ENCODE measurements at regions of chr14 and their contacts with region 1.

Region 1: GRCh38 chr14:44657696-44658388 is 150.8 kb upstream of the FSCB start:
- DNase-seq: peak; percentile 90
- H3K4me3 ChIP-seq: no peak overlapping the region
- H3K27ac ChIP-seq: peak overlapping the region; percentile 65
- H3K4me1 ChIP-seq: peaks cover 43% of the 10 kb centered on the region
- H3K27me3 ChIP-seq: no peaks in the 10 kb centered on the region
- CTCF ChIP-seq: peak; percentile 76

Region 2: DNA sequence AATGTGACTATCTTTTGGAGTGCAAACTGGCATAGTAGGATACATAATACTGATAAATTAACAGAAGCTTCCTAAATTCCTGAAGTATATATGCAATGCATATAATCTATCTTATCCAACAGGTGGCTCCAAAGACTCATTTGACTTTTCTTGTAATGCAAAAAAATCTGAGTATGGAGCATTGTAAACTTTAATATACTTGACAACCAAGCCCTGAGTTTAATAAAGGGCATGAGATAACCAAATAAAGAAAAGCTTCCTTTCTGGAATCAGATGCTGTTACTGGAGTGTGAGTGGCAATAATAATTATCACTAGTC is 1154.3 kb before region 1 on chr14:
- CTCF ChIA-PET with region 1: no interaction called
- POLR2A ChIA-PET with region 1: no interaction called
- intact Hi-C with region 1: loop called (anchors 5 kb)
- DNase-seq: peak; percentile 66
- H3K4me3 ChIP-seq: no peak overlapping the region
- H3K27ac ChIP-seq: no peak overlapping the region
- H3K4me1 ChIP-seq: peaks cover 8% of the 10 kb centered on the region
- H3K27me3 ChIP-seq: no peaks in the 10 kb centered on the region
- CTCF ChIP-seq: peak; percentile 58

Region 3: GRCh38 chr14:44099743-44100488 is 557.9 kb before region 1 on chr14:
- CTCF ChIA-PET with region 1: no interaction called
- POLR2A ChIA-PET with region 1: no interaction called
- intact Hi-C with region 1: loop called (anchors 5 kb)
- DNase-seq: no peak
- H3K4me3 ChIP-seq: no peak overlapping the region
- H3K27ac ChIP-seq: no peak overlapping the region
- H3K4me1 ChIP-seq: peaks cover 8% of the 10 kb centered on the region
- H3K27me3 ChIP-seq: no peaks in the 10 kb centered on the region
- CTCF ChIP-seq: no peak

Region 4: GRCh38 chr14:44149597-44149996 is 508.2 kb before region 1 on chr14:
- CTCF ChIA-PET with region 1: no interaction called
- POLR2A ChIA-PET with region 1: no interaction called
- intact Hi-C with region 1: loop called (anchors 5 kb)
- DNase-seq: peak; percentile 72
- H3K4me3 ChIP-seq: no peak overlapping the region
- H3K27ac ChIP-seq: no peak overlapping the region
- H3K4me1 ChIP-seq: peaks cover 8% of the 10 kb centered on the region
- H3K27me3 ChIP-seq: no peaks in the 10 kb centered on the region
- CTCF ChIP-seq: peak; percentile 66

Region 5: DNA sequence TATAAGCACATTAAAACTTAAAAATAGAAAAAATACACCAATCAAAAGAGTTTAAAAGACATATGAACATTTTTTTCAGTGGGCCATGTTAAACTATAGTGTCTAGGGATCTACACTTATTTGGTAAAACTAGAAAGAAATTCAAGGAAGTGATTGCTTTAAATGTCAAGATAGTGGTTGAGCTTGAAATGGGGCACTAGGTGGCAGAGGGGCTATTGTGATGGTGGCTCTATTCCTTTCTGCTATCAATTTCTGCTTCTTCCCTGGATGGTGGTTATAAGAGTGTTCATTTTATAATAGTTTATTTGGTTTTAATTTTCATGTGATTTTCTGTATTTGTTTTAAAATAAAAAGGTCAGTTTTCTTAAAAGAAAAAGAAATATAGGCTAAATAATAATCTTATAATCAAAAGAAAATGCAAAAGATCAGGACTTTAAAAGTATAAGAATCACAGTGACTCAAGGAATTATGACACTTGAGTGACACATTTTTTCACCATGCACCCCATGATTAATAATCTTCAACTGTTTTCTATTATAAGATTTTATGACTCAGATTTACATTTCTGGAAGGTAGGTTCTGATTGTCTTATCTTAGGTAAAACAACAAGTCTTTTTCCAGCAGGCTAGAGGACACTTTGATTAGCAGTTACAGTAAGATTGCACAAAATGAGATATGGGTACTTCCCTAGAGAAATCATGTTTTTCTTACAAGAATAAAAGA is 288.3 kb before region 1 on chr14:
- CTCF ChIA-PET with region 1: no interaction called
- POLR2A ChIA-PET with region 1: no interaction called
- intact Hi-C with region 1: loop called (anchors 2 kb)
- DNase-seq: peak; percentile 53
- H3K4me3 ChIP-seq: no peak overlapping the region
- H3K27ac ChIP-seq: peak overlapping the region; percentile 20
- H3K4me1 ChIP-seq: peaks cover 39% of the 10 kb centered on the region
- H3K27me3 ChIP-seq: no peaks in the 10 kb centered on the region
- CTCF ChIP-seq: peak; percentile 62

Region 6: DNA sequence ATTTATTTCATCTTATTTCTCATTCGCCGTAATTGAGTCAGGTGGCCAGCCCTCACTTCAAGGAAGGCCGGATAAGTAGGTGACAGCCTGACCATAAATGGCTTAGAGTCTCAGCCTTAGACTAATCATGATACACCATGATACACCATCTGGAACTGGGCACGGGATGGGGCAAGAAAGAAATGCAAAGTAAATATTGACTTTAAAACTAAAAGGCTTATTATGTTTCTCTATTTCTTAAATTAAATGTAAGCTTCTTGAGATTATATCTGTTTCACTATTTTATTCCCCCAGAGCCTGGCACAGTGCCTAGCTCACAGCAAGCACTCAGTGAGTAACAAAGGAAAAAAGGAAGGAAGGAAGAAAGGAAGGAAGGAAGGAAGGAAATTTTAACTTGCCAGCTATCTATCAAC is 44.7 kb before region 1 on chr14:
- CTCF ChIA-PET with region 1: no interaction called
- POLR2A ChIA-PET with region 1: interaction called, 4 read pairs
- intact Hi-C with region 1: loop called (anchors 1 kb)
- DNase-seq: peak; percentile 99
- H3K4me3 ChIP-seq: no peak overlapping the region
- H3K27ac ChIP-seq: peak overlapping the region; percentile 93
- H3K4me1 ChIP-seq: peaks cover 75% of the 10 kb centered on the region
- H3K27me3 ChIP-seq: no peaks in the 10 kb centered on the region
- CTCF ChIP-seq: no peak

Region 7: DNA sequence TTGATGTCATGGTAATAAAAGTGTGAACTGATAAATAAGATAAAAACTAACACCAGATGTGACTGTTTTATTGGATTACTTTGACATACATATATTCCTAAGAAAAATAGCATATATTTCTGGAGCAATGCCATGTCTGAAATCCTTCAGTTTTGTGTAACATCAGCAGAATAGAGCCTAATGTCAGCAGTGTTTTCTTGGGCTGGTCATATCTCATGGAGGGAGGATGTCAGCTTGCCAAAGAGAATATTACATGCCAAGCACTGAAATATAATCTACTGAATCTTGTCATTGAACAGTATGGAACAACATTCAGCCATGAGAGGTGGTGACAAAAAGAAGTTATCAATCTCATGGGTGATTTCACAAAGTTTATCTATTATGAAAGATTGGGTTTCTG is 83.6 kb after region 1 on chr14:
- CTCF ChIA-PET with region 1: no interaction called
- POLR2A ChIA-PET with region 1: no interaction called
- intact Hi-C with region 1: no loop called
- DNase-seq: no peak
- H3K4me3 ChIP-seq: no peak overlapping the region
- H3K27ac ChIP-seq: no peak overlapping the region
- H3K4me1 ChIP-seq: no peaks in the 10 kb centered on the region
- H3K27me3 ChIP-seq: no peaks in the 10 kb centered on the region
- CTCF ChIP-seq: no peak

Region 8: DNA sequence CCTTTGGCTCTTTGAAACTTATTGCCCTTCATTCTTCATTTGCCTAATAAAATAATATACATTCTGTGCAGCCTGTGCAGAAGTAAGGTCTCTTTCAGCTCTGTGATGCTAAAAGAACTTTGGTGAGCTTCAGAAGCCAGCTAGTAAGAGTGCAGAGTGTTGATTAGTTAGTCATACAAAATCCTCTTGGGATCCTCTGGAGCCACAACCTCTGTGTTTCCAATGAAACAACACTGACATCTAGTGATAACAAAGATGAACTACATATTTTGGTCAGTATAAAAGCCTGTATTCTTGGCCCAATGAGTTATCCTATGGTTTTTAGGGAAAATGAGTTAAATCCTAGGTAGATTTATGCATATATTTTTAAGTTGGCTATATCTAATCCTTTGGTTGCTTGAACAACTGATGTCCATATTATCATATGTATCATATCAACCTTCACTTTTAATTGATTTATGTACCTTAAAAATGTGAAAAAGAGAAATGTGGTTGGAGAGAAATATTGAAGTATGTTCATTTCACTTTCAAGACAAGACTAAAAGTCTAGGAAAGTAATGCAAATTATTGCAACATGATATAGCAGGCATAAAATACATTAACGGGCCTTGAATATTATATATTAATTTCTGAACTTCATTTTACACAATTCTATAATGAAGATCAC is 145.5 kb after region 1 on chr14:
- CTCF ChIA-PET with region 1: no interaction called
- POLR2A ChIA-PET with region 1: no interaction called
- intact Hi-C with region 1: loop called (anchors 5 kb)
- DNase-seq: peak; percentile 84
- H3K4me3 ChIP-seq: no peak overlapping the region
- H3K27ac ChIP-seq: no peak overlapping the region
- H3K4me1 ChIP-seq: peaks cover 5% of the 10 kb centered on the region
- H3K27me3 ChIP-seq: no peaks in the 10 kb centered on the region
- CTCF ChIP-seq: peak; percentile 74

Region 9: GRCh38 chr14:45249856-45250575 is 592.2 kb after region 1 on chr14:
- CTCF ChIA-PET with region 1: no interaction called
- POLR2A ChIA-PET with region 1: no interaction called
- intact Hi-C with region 1: no loop called
- DNase-seq: no peak
- H3K4me3 ChIP-seq: no peak overlapping the region
- H3K27ac ChIP-seq: peak overlapping the region; percentile 9
- H3K4me1 ChIP-seq: peaks cover 10% of the 10 kb centered on the region
- H3K27me3 ChIP-seq: no peaks in the 10 kb centered on the region
- CTCF ChIP-seq: no peak

Measured in A673 (cell line).